Pancreas (tissue), 10 donors: ENCODE measurements at regions of chr5 and their contacts with region 1.

Region 1: DNA sequence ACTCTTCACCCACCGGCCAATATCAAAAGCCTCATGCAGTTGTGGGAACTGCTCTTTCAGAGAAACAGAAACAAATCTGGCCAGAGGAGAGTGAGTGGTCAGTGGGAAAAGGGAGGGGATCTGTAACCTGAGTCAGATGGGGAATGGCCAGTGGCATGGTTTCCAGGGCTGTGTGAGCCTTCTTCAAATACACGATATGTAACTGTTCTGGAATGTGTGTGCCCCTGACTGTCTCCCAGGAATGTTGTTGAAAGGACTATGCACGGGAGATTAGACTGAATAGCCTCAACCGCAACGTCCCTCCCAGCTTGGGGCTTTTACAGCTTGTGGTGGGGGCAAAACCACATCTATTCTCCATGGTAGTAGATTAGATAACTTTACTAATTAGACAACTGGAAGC is 60.8 kb downstream of the SH3TC2 start:
- DNase-seq: peak in 2 of 6 donors; percentile 6 to 30
- ATAC-seq: peak; percentile 38 to 87 (median 71)
- H3K4me3 ChIP-seq: no peak overlapping the region
- H3K27ac ChIP-seq: peak overlapping the region in 1 of 4 donors; percentile 33
- H3K4me1 ChIP-seq: no peaks in the 10 kb centered on the region
- H3K27me3 ChIP-seq: no peaks in the 10 kb centered on the region
- CTCF ChIP-seq: no peak

Region 2: DNA sequence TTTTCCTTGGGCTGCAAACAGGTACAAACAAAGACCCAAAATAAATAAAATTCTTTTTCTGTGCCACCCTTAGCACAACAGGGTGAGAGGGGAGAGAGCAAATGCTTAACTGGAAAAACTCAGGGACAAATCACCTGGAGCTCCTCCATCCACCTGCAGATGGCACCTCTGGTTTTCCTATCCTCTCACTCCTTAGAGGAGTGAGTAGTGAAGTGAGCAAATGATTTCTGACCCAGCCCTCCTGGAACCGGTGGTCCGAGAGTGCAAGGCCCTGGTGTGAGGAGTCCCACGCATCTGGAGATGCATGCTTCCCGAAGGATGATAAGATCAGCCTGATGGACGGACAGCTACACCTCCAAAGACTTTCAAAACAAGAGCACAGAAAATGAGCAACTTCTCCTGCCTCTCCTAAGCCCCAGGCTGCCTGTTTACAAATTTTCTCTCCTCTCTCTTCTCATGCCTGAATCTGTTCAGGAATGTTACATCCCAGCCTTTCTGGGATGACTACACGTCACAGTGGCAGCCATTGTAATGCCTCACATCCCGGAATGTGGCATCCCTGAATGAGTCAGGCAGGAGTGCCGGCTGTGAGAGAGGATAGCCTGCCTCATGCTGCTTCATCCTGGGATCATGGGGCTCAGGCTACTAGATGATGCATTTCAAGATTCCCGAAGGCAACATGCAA is 89.2 kb before region 1 on chr5:
- intact Hi-C with region 1: loop called in 1 of 3 experiments (anchors 10 kb)
- DNase-seq: peak in 1 of 6 donors; percentile 20
- ATAC-seq: peak in 3 of 4 donors; percentile 46 to 79 (median 65)
- H3K4me3 ChIP-seq: no peak overlapping the region
- H3K27ac ChIP-seq: no peak overlapping the region
- H3K4me1 ChIP-seq: no peaks in the 10 kb centered on the region
- H3K27me3 ChIP-seq: no peaks in the 10 kb centered on the region
- CTCF ChIP-seq: peak in 3 of 4 donors; percentile 12 to 27 (median 15)

Region 3: DNA sequence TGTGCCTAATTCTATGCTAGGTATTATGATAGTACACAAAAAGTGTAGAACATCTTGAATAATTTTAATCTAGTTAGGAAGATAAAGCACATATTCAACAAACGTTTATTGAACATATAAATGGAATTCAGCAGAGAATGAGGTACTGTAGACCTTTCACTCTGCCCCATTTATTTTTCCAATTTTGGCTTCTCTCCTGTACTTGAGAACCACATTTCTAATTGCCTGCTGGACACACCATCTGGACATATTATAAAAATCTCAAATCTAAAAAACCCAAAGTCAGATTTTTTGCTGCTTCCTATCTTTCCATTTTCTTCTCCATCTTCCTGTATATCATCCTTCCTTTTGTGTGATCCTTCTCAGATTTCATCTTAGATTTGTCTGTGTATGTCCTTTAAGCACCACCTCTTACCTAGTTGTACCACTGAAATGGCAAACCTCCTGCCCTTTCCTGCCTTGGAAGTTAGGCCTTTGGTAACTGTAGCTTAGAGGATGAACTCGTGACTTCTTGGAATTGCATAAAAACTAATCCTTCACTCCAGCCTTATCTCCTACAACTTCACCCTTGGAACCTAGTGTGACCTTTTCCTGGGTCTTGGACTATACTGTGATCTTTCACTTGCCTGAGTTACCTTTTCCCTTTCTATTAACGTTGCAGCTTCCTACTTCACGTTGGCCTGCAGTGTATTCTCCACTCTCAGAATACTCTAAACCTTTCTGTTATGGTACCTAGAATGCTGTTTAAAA is 967.3 kb after region 1 on chr5:
- intact Hi-C with region 1: no loop called
- DNase-seq: no peak
- ATAC-seq: no peak
- H3K4me3 ChIP-seq: no peak overlapping the region
- H3K27ac ChIP-seq: no peak overlapping the region
- H3K4me1 ChIP-seq: no peaks in the 10 kb centered on the region
- H3K27me3 ChIP-seq: no peaks in the 10 kb centered on the region
- CTCF ChIP-seq: no peak